ENCODE measurements at regions of chr2 and their contacts with region 1.

Region 1: DNA sequence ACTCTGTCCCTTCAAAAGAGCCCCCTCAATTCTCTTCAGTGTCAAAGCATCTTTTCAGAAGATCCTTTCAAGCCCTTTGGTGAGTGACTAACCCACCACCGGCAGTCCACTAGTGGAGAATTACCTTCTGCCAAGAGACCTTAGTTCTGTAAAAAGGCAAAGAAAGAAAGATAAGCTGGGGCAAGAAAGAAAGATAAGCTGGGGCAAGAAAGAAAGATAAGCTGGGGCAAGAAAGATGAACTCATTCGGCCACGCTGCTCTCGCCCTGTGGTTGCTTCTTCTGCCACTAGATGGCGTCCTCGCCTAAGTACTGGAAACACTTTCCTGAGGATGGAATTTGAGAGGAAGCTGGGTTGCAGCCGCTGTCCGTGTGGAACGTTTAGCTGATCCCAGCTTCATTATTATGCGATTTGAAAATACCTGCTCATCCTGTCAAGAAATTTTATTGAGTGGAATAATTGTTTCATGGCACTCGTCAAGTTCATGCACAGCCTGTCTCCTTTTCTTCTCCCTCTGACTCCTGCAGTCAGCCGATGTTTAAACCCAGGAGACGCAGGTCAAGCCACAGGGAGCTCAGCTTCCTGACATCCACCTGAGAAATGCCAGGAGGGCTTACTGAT is 17.3 kb upstream of the ANXA4 start:
- DNase-seq: peak; percentile 68 to 91 (median 73)
- ATAC-seq: peak; percentile 98
- H3K4me3 ChIP-seq: no peak overlapping the region
- H3K27ac ChIP-seq: no peak overlapping the region
- H3K4me1 ChIP-seq: peaks cover 6 to 7% of the 10 kb centered on the region in 2 experiments; a peak in 3 of 5 replicates
- H3K27me3 ChIP-seq: no peaks in the 10 kb centered on the region; a peak in 1 of 5 replicates
- CTCF ChIP-seq: peak; percentile 84 to 93 (median 93)
- EP300 ChIP-seq: peak; percentile 60
- POLR2A ChIP-seq: no peak
- RAD21 ChIP-seq: peak; percentile 97 to 99

Region 2: DNA sequence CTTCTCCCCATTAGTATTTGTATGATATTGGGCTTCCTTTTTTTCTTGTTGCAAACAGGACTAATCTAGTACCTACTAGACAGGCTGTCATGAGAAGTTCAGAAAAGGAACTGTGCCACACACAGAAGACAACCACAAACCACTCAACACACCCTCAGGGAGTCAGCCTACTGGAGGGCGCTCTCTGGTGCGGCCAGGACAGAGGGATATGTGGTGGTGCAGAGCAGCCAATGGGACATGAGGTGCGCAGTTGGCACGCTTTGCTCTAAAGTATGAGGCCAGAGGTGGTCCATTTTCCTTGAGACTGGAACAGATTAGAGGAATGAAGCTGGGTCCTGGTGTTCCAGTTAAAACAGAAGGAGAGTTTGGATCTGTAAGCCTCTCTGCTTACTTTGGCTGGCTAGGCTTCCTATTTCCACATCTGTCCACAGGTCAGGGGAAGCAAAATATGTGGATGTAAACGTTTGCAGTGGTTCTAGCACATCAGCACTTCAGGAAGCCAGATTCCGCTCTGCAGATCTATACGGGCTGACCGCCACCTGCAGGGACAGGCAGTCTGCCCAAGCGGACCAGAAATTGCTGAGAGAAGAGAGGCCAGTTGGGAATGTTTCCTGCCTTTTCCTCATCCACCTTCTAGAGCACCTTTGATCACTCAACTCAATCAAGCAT is 451.7 kb before region 1 on chr2:
- CTCF ChIA-PET with region 1: no interaction called
- POLR2A ChIA-PET with region 1: no interaction called
- in situ Hi-C with region 1: no loop called
- intact Hi-C with region 1: no loop called
- DNase-seq: no peak
- ATAC-seq: no peak
- H3K4me3 ChIP-seq: no peak overlapping the region
- H3K27ac ChIP-seq: no peak overlapping the region
- H3K4me1 ChIP-seq: no peaks in the 10 kb centered on the region
- H3K27me3 ChIP-seq: peaks cover 4 to 7% of the 10 kb centered on the region in 2 experiments; a peak in 3 of 5 replicates
- CTCF ChIP-seq: peak; percentile 20 to 31 (median 22); a peak in 3 of 6 replicates
- EP300 ChIP-seq: no peak
- POLR2A ChIP-seq: no peak
- RAD21 ChIP-seq: peak; percentile 32 to 48; a peak in 3 of 4 replicates

Region 3: GRCh38 chr2:69434753-69435152 is 289.9 kb before region 1 on chr2:
- CTCF ChIA-PET with region 1: no interaction called
- POLR2A ChIA-PET with region 1: no interaction called
- in situ Hi-C with region 1: no loop called
- intact Hi-C with region 1: no loop called
- DNase-seq: peak in 3 of 4 experiments; percentile 17 to 25 (median 19)
- ATAC-seq: no peak
- H3K4me3 ChIP-seq: no peak overlapping the region
- H3K27ac ChIP-seq: no peak overlapping the region
- H3K4me1 ChIP-seq: peaks cover 15 to 16% of the 10 kb centered on the region in 2 experiments; a peak in 4 of 5 replicates
- H3K27me3 ChIP-seq: no peaks in the 10 kb centered on the region
- CTCF ChIP-seq: no peak
- EP300 ChIP-seq: no peak
- POLR2A ChIP-seq: no peak
- RAD21 ChIP-seq: no peak

Region 4: DNA sequence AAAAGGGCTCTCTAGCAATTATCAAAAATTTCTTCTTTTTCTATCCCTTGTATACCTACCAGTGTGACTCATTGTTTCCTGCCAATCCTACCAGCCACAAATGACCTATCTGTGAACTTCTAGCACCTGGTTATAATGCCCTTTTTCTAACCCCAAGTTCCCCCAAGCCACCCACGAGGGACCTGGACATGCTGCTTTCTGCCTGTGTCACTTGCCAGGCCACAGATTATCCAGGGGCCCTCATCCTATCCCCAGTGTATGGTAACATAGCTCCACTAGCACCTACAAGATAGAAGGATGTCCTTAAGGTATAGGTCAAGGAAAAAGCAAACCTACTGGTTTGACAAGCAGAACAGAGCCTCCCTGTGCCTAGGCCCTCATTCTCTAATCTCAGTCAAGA is 107.9 kb before region 1 on chr2:
- CTCF ChIA-PET with region 1: no interaction called
- POLR2A ChIA-PET with region 1: no interaction called
- in situ Hi-C with region 1: no loop called
- intact Hi-C with region 1: no loop called
- DNase-seq: no peak
- ATAC-seq: no peak
- H3K4me3 ChIP-seq: no peak overlapping the region
- H3K27ac ChIP-seq: no peak overlapping the region
- H3K4me1 ChIP-seq: peaks cover 4 to 30% of the 10 kb centered on the region in 2 experiments
- H3K27me3 ChIP-seq: no peaks in the 10 kb centered on the region
- CTCF ChIP-seq: no peak
- EP300 ChIP-seq: no peak
- POLR2A ChIP-seq: no peak
- RAD21 ChIP-seq: no peak

Region 5: GRCh38 chr2:69674316-69674670 is 50.4 kb before region 1 on chr2:
- CTCF ChIA-PET with region 1: no interaction called
- POLR2A ChIA-PET with region 1: no interaction called
- in situ Hi-C with region 1: no loop called
- intact Hi-C with region 1: no loop called
- DNase-seq: no peak
- ATAC-seq: no peak
- H3K4me3 ChIP-seq: no peak overlapping the region
- H3K27ac ChIP-seq: no peak overlapping the region
- H3K4me1 ChIP-seq: peaks cover 0 to 3% of the 10 kb centered on the region in 2 experiments; a peak in 3 of 5 replicates
- H3K27me3 ChIP-seq: no peaks in the 10 kb centered on the region
- CTCF ChIP-seq: no peak
- EP300 ChIP-seq: no peak
- POLR2A ChIP-seq: no peak
- RAD21 ChIP-seq: no peak

Region 6: DNA sequence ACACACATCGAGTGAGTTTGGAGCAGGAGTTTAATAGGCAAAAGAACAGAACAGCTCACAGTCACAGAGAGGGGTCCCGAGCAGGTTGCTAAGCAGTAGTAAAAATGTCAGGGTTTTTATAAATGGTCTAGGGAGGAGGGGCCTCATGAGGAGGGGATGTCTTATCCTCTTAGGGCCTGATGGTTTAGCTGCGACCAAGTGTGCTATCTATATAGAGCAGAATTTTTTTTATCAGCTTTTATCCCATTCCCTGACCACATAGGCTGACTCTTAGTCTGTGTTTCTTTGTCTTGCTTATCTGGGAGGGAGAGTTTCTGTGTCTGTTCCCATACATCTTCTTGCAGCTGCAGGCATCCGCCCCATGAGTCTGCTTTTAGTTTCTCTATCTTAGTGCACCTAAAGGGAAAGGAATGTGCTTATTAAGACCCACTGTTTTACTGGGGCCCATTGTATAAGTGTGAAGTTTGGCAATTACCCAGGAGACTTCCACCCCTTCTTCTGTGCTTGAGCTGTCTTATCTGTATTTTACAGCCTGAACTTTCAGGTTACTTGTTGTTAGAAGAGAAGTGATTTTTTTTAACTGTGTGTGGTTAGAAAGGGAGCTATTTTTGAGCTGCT is 74.4 kb after region 1 on chr2:
- CTCF ChIA-PET with region 1: no interaction called
- POLR2A ChIA-PET with region 1: interaction called, 4 read pairs
- in situ Hi-C with region 1: no loop called
- intact Hi-C with region 1: loop called (anchors 1 kb)
- DNase-seq: peak; percentile 89 to 97 (median 89)
- ATAC-seq: peak; percentile 95
- H3K4me3 ChIP-seq: peak overlapping the region; percentile 30
- H3K27ac ChIP-seq: peak overlapping the region; percentile 53; the same call in 1 of the 3 replicates
- H3K4me1 ChIP-seq: peaks cover 3 to 23% of the 10 kb centered on the region in 2 experiments; a peak in 4 of 5 replicates
- H3K27me3 ChIP-seq: no peaks in the 10 kb centered on the region; a peak in 1 of 5 replicates
- CTCF ChIP-seq: no peak
- EP300 ChIP-seq: peak; percentile 95
- POLR2A ChIP-seq: no peak
- RAD21 ChIP-seq: peak in 1 of 2 experiments; percentile 26; a peak in 3 of 4 replicates

Region 7: GRCh38 chr2:69893684-69894551 is 169.3 kb after region 1 on chr2 and contains the start of gene SNRNP27:
- CTCF ChIA-PET with region 1: no interaction called
- POLR2A ChIA-PET with region 1: no interaction called
- in situ Hi-C with region 1: no loop called
- intact Hi-C with region 1: loop called (anchors 5 kb)
- DNase-seq: peak; percentile 67 to 91 (median 77)
- ATAC-seq: peak; percentile 96
- H3K4me3 ChIP-seq: peak within 1 kb of the TSS; percentile 68
- H3K27ac ChIP-seq: peak within 1 kb of the TSS; percentile 79
- H3K4me1 ChIP-seq: peaks cover 3 to 7% of the 10 kb centered on the region in 2 experiments; a peak in 4 of 5 replicates
- H3K27me3 ChIP-seq: no peaks in the 10 kb centered on the region
- CTCF ChIP-seq: no peak
- EP300 ChIP-seq: no peak
- POLR2A ChIP-seq: peak; percentile 90
- RAD21 ChIP-seq: peak in 1 of 2 experiments; percentile 12; a peak in 1 of 4 replicates
- polyA plus RNA-seq, gene SNRNP27: 29.2 to 33.7 TPM

Region 8: DNA sequence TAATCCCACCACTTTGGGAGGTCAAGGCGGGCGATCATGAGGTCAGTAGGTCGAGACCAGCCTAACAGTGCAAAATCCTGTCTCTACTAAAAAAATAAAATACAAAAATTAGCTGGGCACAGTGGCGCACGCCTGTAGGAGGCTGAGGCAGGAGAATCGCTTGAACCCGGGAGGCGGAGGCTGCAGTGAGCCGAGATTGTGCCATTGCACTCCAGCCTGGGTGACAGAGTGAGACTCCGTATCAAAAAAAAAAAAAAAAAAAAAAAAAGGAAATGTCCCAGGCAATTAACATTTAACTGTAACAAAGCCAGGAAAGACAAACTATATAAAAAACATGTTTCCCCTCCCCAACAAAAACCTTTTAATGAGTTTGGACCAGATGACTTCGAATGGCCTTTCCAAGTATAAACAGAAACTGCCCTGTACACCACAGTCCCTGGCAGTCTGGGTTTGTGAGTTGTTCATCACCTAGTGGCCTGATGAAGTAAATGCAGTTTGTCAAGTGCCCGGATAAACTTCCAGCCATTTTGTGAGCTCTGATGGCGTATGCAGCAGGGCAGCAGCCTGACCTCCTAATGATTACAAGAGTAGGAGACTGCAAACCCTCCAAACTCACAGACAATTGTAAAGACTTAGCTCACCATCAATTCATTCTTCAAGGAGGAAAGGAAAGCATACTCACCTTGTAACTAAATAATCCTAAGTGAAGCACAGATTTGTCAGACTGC is 346.1 kb after region 1 on chr2:
- CTCF ChIA-PET with region 1: no interaction called
- POLR2A ChIA-PET with region 1: no interaction called
- in situ Hi-C with region 1: loop called (anchors 10 kb)
- intact Hi-C with region 1: loop called (anchors 10 kb)
- DNase-seq: peak; percentile 75 to 87 (median 81)
- ATAC-seq: peak; percentile 96
- H3K4me3 ChIP-seq: no peak overlapping the region
- H3K27ac ChIP-seq: peak overlapping the region; percentile 47; the same call in 1 of the 3 replicates
- H3K4me1 ChIP-seq: peaks cover 2 to 5% of the 10 kb centered on the region in 2 experiments; a peak in 3 of 5 replicates
- H3K27me3 ChIP-seq: no peaks in the 10 kb centered on the region
- CTCF ChIP-seq: peak; percentile 88 to 95 (median 89)
- EP300 ChIP-seq: no peak
- POLR2A ChIP-seq: no peak
- RAD21 ChIP-seq: peak; percentile 91 to 94